Dorsolateral prefrontal cortex (tissue), 120 donors: ENCODE measurements at regions of chr3 and their contacts with region 1.

Region 1: DNA sequence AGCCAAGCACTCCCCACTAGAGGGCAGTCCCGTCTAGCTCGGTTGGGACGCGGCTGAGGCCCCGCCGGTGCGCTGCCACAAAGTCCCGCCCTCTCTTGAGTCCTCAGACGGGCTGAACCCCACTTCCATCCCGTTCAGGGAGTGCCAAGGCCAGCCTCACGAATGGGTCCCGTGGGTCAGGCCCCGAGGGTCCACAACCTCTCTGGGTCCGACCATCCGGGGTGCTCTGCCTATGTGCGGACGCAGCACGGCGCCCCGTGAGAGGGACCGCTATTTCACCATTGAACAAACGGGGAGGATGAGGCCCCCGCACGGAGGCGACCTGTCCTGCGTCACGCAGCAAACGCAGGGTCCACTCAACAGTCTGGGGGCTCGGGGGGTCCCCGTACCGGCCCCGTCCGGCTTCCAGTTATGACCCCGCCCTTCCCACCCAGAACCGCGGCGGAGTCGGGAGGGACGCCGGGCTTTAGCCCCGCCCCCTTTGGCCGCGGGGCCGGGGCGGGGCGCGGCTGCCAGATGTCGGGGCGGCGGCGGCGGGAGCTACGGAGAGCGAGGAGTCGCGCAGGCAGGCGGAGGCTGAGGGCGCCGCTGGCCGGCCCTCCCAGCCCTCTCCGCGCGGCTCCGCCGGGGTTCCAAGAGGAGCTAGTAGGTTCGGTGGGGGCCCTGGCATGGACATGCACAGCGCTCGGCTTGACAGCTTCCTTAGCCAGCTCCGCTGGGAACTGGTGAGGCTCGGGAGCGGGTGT is at the start of gene INKA1:
- DNase-seq: peak; percentile 78 to 92 (median 89)
- H3K4me3 ChIP-seq: peak within 1 kb of the TSS; percentile 64 to 99 (median 86)
- H3K27ac ChIP-seq: peak within 1 kb of the TSS; percentile 56 to 95 (median 89)
- H3K27me3 ChIP-seq: no peaks in the 10 kb centered on the region
- CTCF ChIP-seq: peak; percentile 73 to 96 (median 88)
- total RNA-seq, gene INKA1: 1.6 to 8.8 (median 5.3) TPM

Region 2: DNA sequence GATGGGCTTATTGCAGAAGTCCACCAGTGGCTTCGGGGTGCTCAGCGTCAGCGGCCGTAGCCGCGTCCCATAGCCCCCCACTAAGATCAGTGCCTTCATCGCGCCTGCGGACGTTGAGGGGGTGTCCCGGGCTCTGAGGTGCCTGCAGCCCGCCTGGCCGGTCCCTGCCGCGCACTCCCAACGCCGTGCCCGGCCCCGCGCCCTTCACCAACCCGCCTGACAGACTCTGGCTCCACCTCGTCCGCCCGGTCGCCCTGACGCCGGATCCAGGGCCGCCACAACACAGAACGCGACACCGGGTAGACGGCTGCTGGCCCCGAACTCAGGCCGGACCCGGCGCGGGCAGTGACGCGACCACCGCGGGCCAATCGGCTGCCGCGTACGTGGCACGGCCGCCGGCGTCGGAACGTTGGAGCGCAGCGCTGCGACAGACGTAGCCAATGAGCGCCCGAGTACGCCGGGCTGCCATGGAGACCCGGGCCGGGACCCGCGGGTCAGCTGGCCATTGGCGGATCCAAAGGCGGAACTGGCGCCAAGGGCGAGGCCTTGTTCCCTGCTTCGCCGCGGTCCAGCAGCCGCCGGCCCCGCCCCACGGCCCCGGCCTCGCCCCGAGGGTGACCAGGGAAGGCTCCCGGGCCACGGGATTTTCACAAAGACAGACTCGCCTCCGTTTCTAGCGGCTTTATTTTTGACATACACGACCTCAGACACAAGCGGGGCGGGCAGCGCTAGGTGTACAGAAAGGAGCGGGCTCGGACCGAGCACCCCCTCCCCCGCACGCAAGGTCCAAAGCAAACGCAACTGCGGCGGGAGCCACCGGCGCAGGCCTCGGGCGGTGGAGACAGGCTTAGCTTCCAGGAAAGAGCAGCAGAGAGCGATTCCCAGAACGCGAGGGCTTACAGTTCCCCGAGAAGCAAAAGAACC is 79.0 kb before region 1 on chr3 and contains the start of gene GMPPB:
- intact Hi-C with region 1: loop called in 1 of 2 experiments (anchors 2 kb)
- DNase-seq: peak; percentile 93 to 98 (median 97)
- H3K4me3 ChIP-seq: peak within 1 kb of the TSS; percentile 70 to 100 (median 96)
- H3K27ac ChIP-seq: peak within 1 kb of the TSS in 56 of 59 donors; percentile 18 to 93 (median 84)
- H3K27me3 ChIP-seq: no peaks in the 10 kb centered on the region
- CTCF ChIP-seq: peak in 14 of 56 donors; percentile 13 to 40 (median 26)
- total RNA-seq, gene GMPPB: 10.6 to 25.4 (median 17.0) TPM

Region 3: GRCh38 chr3:49786241-49786958 is 16.5 kb before region 1 on chr3 and contains the start of gene IP6K1:
- intact Hi-C with region 1: loop called in 1 of 2 experiments (anchors 2 kb)
- DNase-seq: peak; percentile 100
- H3K4me3 ChIP-seq: peak within 1 kb of the TSS; percentile 69 to 100 (median 96)
- H3K27ac ChIP-seq: peak within 1 kb of the TSS; percentile 61 to 99 (median 95)
- H3K27me3 ChIP-seq: no peaks in the 10 kb centered on the region
- CTCF ChIP-seq: peak in 25 of 56 donors; percentile 8 to 56 (median 23)
- total RNA-seq, gene IP6K1: 82.9 to 160 (median 118) TPM

Region 4: DNA sequence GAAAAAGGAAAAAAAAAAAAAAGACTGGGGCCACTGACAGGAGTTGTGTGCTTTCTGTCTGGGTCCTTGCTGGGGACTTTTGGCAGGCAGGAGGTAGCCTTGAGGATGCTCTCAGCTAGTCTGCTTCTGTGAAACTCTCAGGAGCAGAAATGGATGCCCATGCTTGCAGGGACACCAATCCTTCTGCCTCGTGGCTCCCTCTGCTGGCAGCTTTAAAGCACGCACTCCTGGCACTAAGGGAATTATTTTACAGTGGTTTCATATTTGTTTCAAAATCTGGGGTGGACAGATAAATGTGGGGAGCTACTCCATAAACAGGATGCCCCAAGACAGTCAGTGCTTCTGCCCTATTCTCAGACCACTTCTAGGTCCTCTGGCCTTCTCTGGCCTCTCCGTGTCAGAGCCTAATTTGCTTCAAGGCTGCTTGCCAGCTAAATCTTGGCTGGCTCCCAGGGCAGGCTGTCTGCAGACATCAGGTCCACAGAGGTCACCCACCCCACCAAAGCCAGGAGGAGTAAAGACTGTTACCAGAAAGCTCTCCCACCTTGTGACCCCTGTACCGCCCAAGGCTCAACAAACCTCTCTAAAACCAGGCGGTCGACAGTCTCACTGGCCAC is 36.4 kb after region 1 on chr3:
- intact Hi-C with region 1: loop called (anchors 1 to 2 kb)
- DNase-seq: peak; percentile 68 to 86 (median 81)
- H3K4me3 ChIP-seq: peak overlapping the region in 5 of 59 donors; percentile 9 to 22 (median 17)
- H3K27ac ChIP-seq: peak overlapping the region in 19 of 59 donors; percentile 8 to 81 (median 51)
- H3K27me3 ChIP-seq: no peaks in the 10 kb centered on the region
- CTCF ChIP-seq: peak; percentile 71 to 97 (median 89)

Region 5: DNA sequence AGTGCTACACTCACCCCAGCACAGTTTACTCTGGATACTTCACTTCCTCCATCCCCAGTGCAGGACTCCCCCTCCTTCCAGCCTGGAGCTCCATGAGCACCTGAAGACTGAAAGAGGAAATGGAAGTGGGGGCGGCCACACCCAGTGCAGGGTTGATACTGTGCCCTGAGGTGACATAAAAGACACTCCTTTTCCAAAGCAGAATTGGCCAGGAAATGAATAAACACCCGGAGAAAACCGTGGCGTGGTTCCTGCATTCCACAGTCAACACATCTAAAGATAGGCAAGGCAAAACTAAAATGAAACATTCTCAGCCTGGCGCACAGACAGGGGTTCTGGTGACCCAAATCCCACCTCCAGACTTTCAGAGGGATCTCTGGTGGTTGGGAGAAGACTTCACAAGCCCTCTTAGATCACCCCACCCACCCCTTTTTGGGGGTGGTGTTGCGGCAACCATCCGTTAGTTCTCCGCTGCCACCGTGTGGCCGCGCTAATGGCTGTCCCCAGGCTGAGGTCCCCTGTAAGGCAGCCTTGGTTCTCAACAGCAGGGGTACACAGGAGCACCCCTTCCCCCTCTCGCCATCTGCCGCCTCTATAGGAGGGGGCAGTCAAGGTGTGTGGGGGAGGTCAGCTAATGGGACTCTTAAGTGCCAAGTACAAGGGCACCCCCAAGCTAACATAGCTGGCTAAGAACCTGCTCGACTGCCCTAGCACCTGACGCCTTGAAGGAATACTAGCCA is 103.3 kb after region 1 on chr3:
- intact Hi-C with region 1: loop called in 1 of 2 experiments (anchors 1 kb)
- DNase-seq: peak in 8 of 10 donors; percentile 41 to 75 (median 59)
- H3K4me3 ChIP-seq: peak overlapping the region in 37 of 59 donors; percentile 1 to 43 (median 26)
- H3K27ac ChIP-seq: peak overlapping the region in 45 of 59 donors; percentile 12 to 74 (median 45)
- H3K27me3 ChIP-seq: no peaks in the 10 kb centered on the region
- CTCF ChIP-seq: peak; percentile 38 to 79 (median 64)

Region 6: GRCh38 chr3:51102396-51102795 is 1299.5 kb after region 1 on chr3:
- intact Hi-C with region 1: no loop called
- DNase-seq: no peak
- H3K4me3 ChIP-seq: no peak overlapping the region
- H3K27ac ChIP-seq: no peak overlapping the region
- H3K27me3 ChIP-seq: no peaks in the 10 kb centered on the region
- CTCF ChIP-seq: no peak